CD8-positive, alpha-beta memory T cell (primary cell): ENCODE measurements at regions of chr17 and their contacts with region 1.

Region 1: DNA sequence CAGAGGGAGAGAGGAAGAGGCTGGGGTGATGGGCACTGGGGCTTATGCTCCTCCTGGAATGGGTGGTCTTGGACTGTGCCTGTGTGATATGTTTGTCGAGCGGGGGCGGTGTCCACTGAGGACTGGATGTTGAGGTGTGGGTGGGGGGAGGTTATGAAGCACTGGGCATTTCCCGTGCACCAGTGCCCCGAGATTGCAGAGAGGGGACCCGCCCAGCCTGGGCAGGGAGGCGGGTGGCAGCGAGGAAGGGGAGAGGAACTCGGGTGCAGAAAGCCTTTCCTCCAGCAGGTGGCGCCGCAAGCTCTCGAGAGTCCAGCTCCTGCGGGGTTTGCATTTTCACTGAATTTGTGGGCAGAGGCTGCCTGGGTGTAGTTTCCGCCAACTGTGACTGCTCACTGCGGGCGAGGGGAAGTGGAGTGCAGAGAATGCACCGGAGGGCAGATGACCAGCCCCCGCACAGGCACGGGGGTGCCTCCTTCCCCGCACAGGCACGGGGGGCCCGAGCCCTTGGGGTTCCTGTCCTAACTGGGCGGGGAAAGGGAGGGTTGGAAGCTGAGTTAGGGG is 190.6 kb downstream of the SEC14L1 start:
- DNase-seq: peak; percentile 90 to 96 (median 92)
- H3K4me3 ChIP-seq: peak overlapping the region; percentile 50
- H3K4me3 Mint-ChIP-seq: peak overlapping the region; percentile 73 to 91 (median 84)
- H3K27ac ChIP-seq: peak overlapping the region; percentile 45
- H3K27ac Mint-ChIP-seq: peak overlapping the region; percentile 83 to 96 (median 92)
- H3K4me1 ChIP-seq: peaks cover 46% of the 10 kb centered on the region
- H3K4me1 Mint-ChIP-seq: peaks cover 36 to 52% (median 49%) of the 10 kb centered on the region in 3 donors
- H3K27me3 ChIP-seq: no peaks in the 10 kb centered on the region
- H3K27me3 Mint-ChIP-seq: peaks cover 0 to 5% of the 10 kb centered on the region in 2 donors

Region 2: GRCh38 chr17:77288100-77288619 is 43.2 kb before region 1 on chr17:
- CTCF ChIA-PET with region 1: no interaction called
- POLR2A ChIA-PET with region 1: no interaction called
- DNase-seq: no peak
- H3K4me3 ChIP-seq: no peak overlapping the region
- H3K4me3 Mint-ChIP-seq: no peak overlapping the region
- H3K27ac ChIP-seq: no peak overlapping the region
- H3K27ac Mint-ChIP-seq: peak overlapping the region in 1 of 8 donors; percentile 86
- H3K4me1 ChIP-seq: no peaks in the 10 kb centered on the region
- H3K4me1 Mint-ChIP-seq: no peaks in the 10 kb centered on the region
- H3K27me3 ChIP-seq: no peaks in the 10 kb centered on the region
- H3K27me3 Mint-ChIP-seq: peaks cover 2 to 20% of the 10 kb centered on the region in 2 donors

Region 3: DNA sequence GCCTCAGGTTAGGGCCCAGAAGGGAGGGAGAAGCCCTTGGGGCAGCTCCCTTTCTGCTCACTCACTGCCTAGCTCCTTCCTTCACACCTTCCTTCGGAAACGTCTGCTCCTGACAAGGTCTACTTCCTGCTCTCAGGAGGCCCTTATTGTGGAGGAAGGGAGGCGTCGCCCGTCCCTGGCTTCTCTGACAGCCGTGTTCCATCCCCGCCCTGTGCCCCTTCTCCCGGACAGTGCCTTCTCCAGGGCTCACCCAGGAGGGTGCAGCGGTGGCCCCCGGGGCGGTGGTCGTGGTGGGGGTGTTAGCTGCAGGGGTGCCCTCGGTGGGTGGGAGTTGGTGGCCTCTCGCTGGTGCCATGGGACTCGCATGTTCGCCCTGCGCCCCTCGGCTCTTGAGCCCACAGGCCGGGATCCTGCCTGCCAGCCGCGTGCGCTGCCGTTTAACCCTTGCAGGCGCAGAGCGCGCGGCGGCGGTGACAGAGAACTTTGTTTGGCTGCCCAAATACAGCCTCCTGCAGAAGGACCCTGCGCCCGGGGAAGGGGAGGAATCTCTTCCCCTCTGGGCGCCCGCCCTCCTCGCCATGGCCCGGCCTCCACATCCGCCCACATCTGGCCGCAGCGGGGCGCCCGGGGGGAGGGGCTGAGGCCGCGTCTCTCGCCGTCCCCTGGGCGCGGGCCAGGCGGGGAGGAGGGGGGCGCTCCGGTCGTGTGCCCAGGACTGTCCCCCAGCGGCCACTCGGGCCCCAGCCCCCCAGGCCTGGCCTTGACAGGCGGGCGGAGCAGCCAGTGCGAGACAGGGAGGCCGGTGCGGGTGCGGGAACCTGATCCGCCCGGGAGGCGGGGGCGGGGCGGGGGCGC is 41.3 kb after region 1 on chr17:
- CTCF ChIA-PET with region 1: interaction called, 55 read pairs
- POLR2A ChIA-PET with region 1: interaction called, 32 read pairs
- DNase-seq: peak; percentile 55 to 76 (median 65)
- H3K4me3 ChIP-seq: peak overlapping the region; percentile 77
- H3K4me3 Mint-ChIP-seq: peak overlapping the region; percentile 80 to 93 (median 82)
- H3K27ac ChIP-seq: peak overlapping the region; percentile 82
- H3K27ac Mint-ChIP-seq: peak overlapping the region; percentile 79 to 95 (median 88)
- H3K4me1 ChIP-seq: peaks cover 70% of the 10 kb centered on the region
- H3K4me1 Mint-ChIP-seq: peaks cover 56 to 71% (median 67%) of the 10 kb centered on the region in 3 donors
- H3K27me3 ChIP-seq: no peaks in the 10 kb centered on the region
- H3K27me3 Mint-ChIP-seq: no peaks in the 10 kb centered on the region

Region 4: GRCh38 chr17:77391668-77392375 is 60.4 kb after region 1 on chr17:
- CTCF ChIA-PET with region 1: interaction called, 28 read pairs
- POLR2A ChIA-PET with region 1: interaction called, 4 read pairs
- DNase-seq: peak in 2 of 5 donors; percentile 26 to 63
- H3K4me3 ChIP-seq: no peak overlapping the region
- H3K4me3 Mint-ChIP-seq: peak overlapping the region; percentile 20 to 76 (median 62)
- H3K27ac ChIP-seq: peak overlapping the region; percentile 3
- H3K27ac Mint-ChIP-seq: peak overlapping the region; percentile 76 to 96 (median 84)
- H3K4me1 ChIP-seq: peaks cover 72% of the 10 kb centered on the region
- H3K4me1 Mint-ChIP-seq: peaks cover 74 to 89% (median 79%) of the 10 kb centered on the region in 3 donors
- H3K27me3 ChIP-seq: no peaks in the 10 kb centered on the region
- H3K27me3 Mint-ChIP-seq: no peaks in the 10 kb centered on the region

Region 5: GRCh38 chr17:77420804-77421629 is 89.6 kb after region 1 on chr17:
- CTCF ChIA-PET with region 1: interaction called, 13 read pairs
- POLR2A ChIA-PET with region 1: interaction called, 3 read pairs
- DNase-seq: peak; percentile 53 to 74 (median 62)
- H3K4me3 ChIP-seq: peak overlapping the region; percentile 10
- H3K4me3 Mint-ChIP-seq: peak overlapping the region; percentile 31 to 81 (median 73)
- H3K27ac ChIP-seq: peak overlapping the region; percentile 44
- H3K27ac Mint-ChIP-seq: peak overlapping the region; percentile 66 to 96 (median 94)
- H3K4me1 ChIP-seq: peaks cover 62% of the 10 kb centered on the region
- H3K4me1 Mint-ChIP-seq: peaks cover 43 to 86% (median 53%) of the 10 kb centered on the region in 3 donors
- H3K27me3 ChIP-seq: no peaks in the 10 kb centered on the region
- H3K27me3 Mint-ChIP-seq: no peaks in the 10 kb centered on the region

Region 6: DNA sequence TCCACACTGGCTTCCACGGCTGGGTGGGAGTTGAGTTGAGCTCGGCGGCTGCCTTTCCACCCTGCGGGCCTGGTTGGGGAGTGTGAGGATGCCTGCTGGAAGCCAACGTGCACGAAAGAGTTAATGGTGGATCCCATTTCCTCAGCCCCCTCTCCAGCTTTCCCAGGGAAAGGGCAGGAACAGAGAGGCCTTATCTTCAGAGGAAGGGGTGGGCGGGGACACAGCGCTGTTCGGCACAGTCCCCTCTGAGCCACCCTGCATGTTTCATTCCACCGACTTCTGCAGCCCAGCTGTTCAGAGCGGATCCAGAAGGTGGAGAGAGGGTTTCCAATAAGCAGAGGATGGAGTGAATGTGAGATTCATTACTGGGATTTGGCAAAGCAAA is 104.7 kb after region 1 on chr17:
- CTCF ChIA-PET with region 1: interaction called, 14 read pairs
- POLR2A ChIA-PET with region 1: interaction called, 16 read pairs
- DNase-seq: no peak
- H3K4me3 ChIP-seq: peak overlapping the region; percentile 63
- H3K4me3 Mint-ChIP-seq: peak overlapping the region; percentile 13 to 89 (median 85)
- H3K27ac ChIP-seq: no peak overlapping the region
- H3K27ac Mint-ChIP-seq: peak overlapping the region in 7 of 8 donors; percentile 29 to 90 (median 87)
- H3K4me1 ChIP-seq: peaks cover 99% of the 10 kb centered on the region
- H3K4me1 Mint-ChIP-seq: peaks cover 80 to 100% (median 90%) of the 10 kb centered on the region in 3 donors
- H3K27me3 ChIP-seq: no peaks in the 10 kb centered on the region
- H3K27me3 Mint-ChIP-seq: no peaks in the 10 kb centered on the region

Region 7: GRCh38 chr17:77476931-77477877 is 145.8 kb after region 1 on chr17:
- CTCF ChIA-PET with region 1: interaction called, 5 read pairs
- POLR2A ChIA-PET with region 1: interaction called, 11 read pairs
- DNase-seq: peak in 2 of 5 donors; percentile 26 to 47
- H3K4me3 ChIP-seq: no peak overlapping the region
- H3K4me3 Mint-ChIP-seq: peak overlapping the region; percentile 13 to 92 (median 50)
- H3K27ac ChIP-seq: no peak overlapping the region
- H3K27ac Mint-ChIP-seq: peak overlapping the region; percentile 76 to 94 (median 88)
- H3K4me1 ChIP-seq: peaks cover 86% of the 10 kb centered on the region
- H3K4me1 Mint-ChIP-seq: peaks cover 71 to 89% (median 76%) of the 10 kb centered on the region in 3 donors
- H3K27me3 ChIP-seq: no peaks in the 10 kb centered on the region
- H3K27me3 Mint-ChIP-seq: no peaks in the 10 kb centered on the region